Activated CD4-positive, alpha-beta memory T cell treated with anti-CD3 and anti-CD28 coated beads for 36 hours (primary cell): ENCODE measurements at regions of chr6 and their contacts with region 1.

Region 1: GRCh38 chr6:24494821-24495795 is at the start of gene ALDH5A1:
- DNase-seq: peak; percentile 89
- H3K4me3 Mint-ChIP-seq: peak within 1 kb of the TSS; percentile 78
- H3K27ac Mint-ChIP-seq: peak within 1 kb of the TSS; percentile 44
- H3K4me1 Mint-ChIP-seq: peaks cover 13% of the 10 kb centered on the region
- H3K27me3 Mint-ChIP-seq: no peaks in the 10 kb centered on the region
- total RNA-seq, gene ALDH5A1: 13.1 to 13.9 TPM

Region 2: DNA sequence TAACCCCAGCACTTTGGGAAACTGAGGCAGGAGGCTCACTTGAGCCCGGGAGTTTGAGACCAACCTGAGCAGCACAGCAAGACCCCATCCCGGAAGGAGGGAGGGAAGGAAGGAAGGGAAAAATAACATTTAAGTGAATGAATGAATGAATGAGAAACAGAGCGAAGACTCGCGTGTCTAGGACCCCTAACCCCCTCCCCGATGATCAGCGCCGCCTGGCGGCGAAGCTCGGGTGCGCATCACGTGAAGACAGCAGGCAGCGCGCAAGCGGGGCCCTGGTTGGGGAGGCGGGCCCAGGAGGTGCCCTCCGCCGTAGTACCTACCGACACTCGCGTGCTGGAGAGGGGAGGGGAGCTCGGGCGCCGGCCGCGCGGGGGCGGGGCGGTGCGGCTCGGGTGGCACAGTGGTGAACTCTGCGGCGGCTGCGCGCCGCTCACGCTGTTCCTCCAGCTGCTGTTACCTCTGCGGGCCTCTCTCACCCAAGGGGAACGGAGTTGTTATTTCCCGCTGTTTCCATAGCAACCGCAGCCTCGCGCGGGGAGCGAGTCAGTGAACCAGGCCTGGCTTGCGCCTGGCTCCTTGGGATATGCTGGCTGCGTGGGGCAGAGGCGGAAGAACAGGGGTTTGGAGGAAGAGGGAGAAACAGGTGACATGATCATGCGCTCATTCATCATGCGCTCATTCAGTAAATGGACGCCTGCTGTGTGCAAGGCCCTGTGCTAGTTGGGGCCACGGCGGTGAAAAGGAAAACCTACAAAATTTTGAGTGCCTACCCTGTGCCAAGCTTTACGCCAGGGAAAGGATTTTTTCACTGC is 135.3 kb before region 1 on chr6:
- CTCF ChIA-PET with region 1: interaction called, 5 read pairs
- POLR2A ChIA-PET with region 1: no interaction called
- intact Hi-C with region 1: loop called (anchors 2 kb)
- DNase-seq: peak; percentile 93
- H3K4me3 Mint-ChIP-seq: peak overlapping the region; percentile 69
- H3K27ac Mint-ChIP-seq: no peak overlapping the region
- H3K4me1 Mint-ChIP-seq: peaks cover 25% of the 10 kb centered on the region
- H3K27me3 Mint-ChIP-seq: peaks cover 6% of the 10 kb centered on the region

Region 3: GRCh38 chr6:24484657-24485323 is 10.3 kb before region 1 on chr6:
- CTCF ChIA-PET with region 1: interaction called, 10 read pairs
- POLR2A ChIA-PET with region 1: no interaction called
- intact Hi-C with region 1: no loop called
- DNase-seq: no peak
- H3K4me3 Mint-ChIP-seq: no peak overlapping the region
- H3K27ac Mint-ChIP-seq: no peak overlapping the region
- H3K4me1 Mint-ChIP-seq: no peaks in the 10 kb centered on the region
- H3K27me3 Mint-ChIP-seq: no peaks in the 10 kb centered on the region

Region 4: DNA sequence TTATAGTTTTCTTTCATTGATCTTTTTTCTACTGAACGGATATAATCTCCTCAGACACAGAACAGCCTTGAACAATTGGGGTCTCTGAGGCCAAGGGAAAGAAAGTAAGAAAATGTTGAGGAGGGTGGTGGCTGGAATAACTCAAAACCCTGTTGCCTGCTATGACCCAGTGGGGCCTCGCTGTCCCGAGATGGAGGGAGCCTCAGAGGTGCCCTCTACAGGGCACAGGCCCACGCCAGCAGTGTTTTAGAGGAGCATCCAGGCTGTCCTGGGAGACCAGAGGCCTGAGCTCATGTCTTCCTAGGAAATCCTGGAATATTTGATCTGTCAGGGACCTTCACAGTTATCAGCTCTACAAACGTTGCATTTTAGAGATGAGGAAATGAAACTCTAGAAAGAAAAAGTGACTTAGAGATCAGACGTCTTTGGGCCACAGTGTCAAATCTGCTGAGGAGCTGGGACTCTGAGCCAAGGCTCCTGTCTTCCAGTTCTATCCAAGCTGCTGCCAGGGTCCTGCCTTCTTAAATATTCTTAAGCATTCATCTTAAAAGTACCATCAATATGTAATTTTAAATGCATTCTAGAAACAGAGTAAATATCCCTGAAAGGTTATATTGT is 25.9 kb after region 1 on chr6:
- CTCF ChIA-PET with region 1: interaction called, 22 read pairs
- POLR2A ChIA-PET with region 1: no interaction called
- intact Hi-C with region 1: loop called (anchors 2 kb)
- DNase-seq: peak; percentile 61
- H3K4me3 Mint-ChIP-seq: no peak overlapping the region
- H3K27ac Mint-ChIP-seq: no peak overlapping the region
- H3K4me1 Mint-ChIP-seq: no peaks in the 10 kb centered on the region
- H3K27me3 Mint-ChIP-seq: no peaks in the 10 kb centered on the region

Region 5: GRCh38 chr6:24666641-24667377 is 171.7 kb after region 1 on chr6 and contains the starts of genes ACOT13 and TDP2:
- CTCF ChIA-PET with region 1: no interaction called
- POLR2A ChIA-PET with region 1: no interaction called
- intact Hi-C with region 1: loop called (anchors 10 kb)
- DNase-seq: peak; percentile 98
- H3K4me3 Mint-ChIP-seq: peak within 1 kb of the TSS; percentile 95
- H3K27ac Mint-ChIP-seq: peak within 1 kb of the TSS; percentile 93
- H3K4me1 Mint-ChIP-seq: peaks cover 53% of the 10 kb centered on the region
- H3K27me3 Mint-ChIP-seq: no peaks in the 10 kb centered on the region
- total RNA-seq, gene ACOT13: 33.7 to 35.9 TPM
- total RNA-seq, gene TDP2: 47.5 to 48.6 TPM

Region 6: GRCh38 chr6:24689964-24690363 is 194.9 kb after region 1 on chr6:
- CTCF ChIA-PET with region 1: no interaction called
- POLR2A ChIA-PET with region 1: no interaction called
- intact Hi-C with region 1: loop called (anchors 10 kb)
- DNase-seq: no peak
- H3K4me3 Mint-ChIP-seq: no peak overlapping the region
- H3K27ac Mint-ChIP-seq: no peak overlapping the region
- H3K4me1 Mint-ChIP-seq: peaks cover 18% of the 10 kb centered on the region
- H3K27me3 Mint-ChIP-seq: no peaks in the 10 kb centered on the region

Region 7: GRCh38 chr6:24743265-24743943 is 248.3 kb after region 1 on chr6:
- CTCF ChIA-PET with region 1: no interaction called
- POLR2A ChIA-PET with region 1: no interaction called
- intact Hi-C with region 1: loop called (anchors 1 kb)
- DNase-seq: peak; percentile 66
- H3K4me3 Mint-ChIP-seq: peak overlapping the region; percentile 47
- H3K27ac Mint-ChIP-seq: peak overlapping the region; percentile 91
- H3K4me1 Mint-ChIP-seq: peaks cover 25% of the 10 kb centered on the region
- H3K27me3 Mint-ChIP-seq: peaks cover 1% of the 10 kb centered on the region

Region 8: GRCh38 chr6:25112207-25112874 is 617.2 kb after region 1 on chr6:
- CTCF ChIA-PET with region 1: no interaction called
- POLR2A ChIA-PET with region 1: no interaction called
- intact Hi-C with region 1: no loop called
- DNase-seq: no peak
- H3K4me3 Mint-ChIP-seq: no peak overlapping the region
- H3K27ac Mint-ChIP-seq: no peak overlapping the region
- H3K4me1 Mint-ChIP-seq: peaks cover 3% of the 10 kb centered on the region
- H3K27me3 Mint-ChIP-seq: no peaks in the 10 kb centered on the region